ENCODE measurements at regions of chr15 and their contacts with region 1.

Region 1: GRCh38 chr15:67613708-67614107 is 71.2 kb downstream of the MAP2K5 start:
- DNase-seq: no peak
- H3K4me3 ChIP-seq: no peak overlapping the region
- H3K27ac ChIP-seq: no peak overlapping the region
- H3K4me1 ChIP-seq: peaks cover 0 to 3% (median 1%) of the 10 kb centered on the region in 4 experiments; a peak in 2 of 7 replicates
- H3K27me3 ChIP-seq: no peaks in the 10 kb centered on the region
- CTCF ChIP-seq: peak in 2 of 3 experiments; percentile 41 to 81; a peak in 3 of 4 replicates
- EP300 ChIP-seq: no peak
- POLR2A ChIP-seq: no peak
- RAD21 ChIP-seq: peak in 1 of 2 experiments; percentile 25; a peak in 1 of 4 replicates

Region 2: GRCh38 chr15:67603063-67603462 is 10.6 kb before region 1 on chr15:
- CTCF ChIA-PET with region 1: interaction called, 20 read pairs
- POLR2A ChIA-PET with region 1: interaction called, 3 read pairs
- DNase-seq: no peak
- H3K4me3 ChIP-seq: no peak overlapping the region
- H3K27ac ChIP-seq: no peak overlapping the region
- H3K4me1 ChIP-seq: no peaks in the 10 kb centered on the region
- H3K27me3 ChIP-seq: no peaks in the 10 kb centered on the region
- CTCF ChIP-seq: no peak
- EP300 ChIP-seq: no peak
- POLR2A ChIP-seq: no peak
- RAD21 ChIP-seq: no peak